ENCODE measurements at regions of chr3 and their contacts with region 1.

Region 1: GRCh38 chr3:14943042-14943441 is 4.3 kb upstream of the NR2C2 start:
- DNase-seq: no peak
- H3K4me3 ChIP-seq: no peak overlapping the region
- H3K27ac ChIP-seq: no peak overlapping the region
- H3K4me1 ChIP-seq: no peaks in the 10 kb centered on the region
- H3K27me3 ChIP-seq: no peaks in the 10 kb centered on the region
- CTCF ChIP-seq: no peak
- POLR2A ChIP-seq: no peak

Region 2: DNA sequence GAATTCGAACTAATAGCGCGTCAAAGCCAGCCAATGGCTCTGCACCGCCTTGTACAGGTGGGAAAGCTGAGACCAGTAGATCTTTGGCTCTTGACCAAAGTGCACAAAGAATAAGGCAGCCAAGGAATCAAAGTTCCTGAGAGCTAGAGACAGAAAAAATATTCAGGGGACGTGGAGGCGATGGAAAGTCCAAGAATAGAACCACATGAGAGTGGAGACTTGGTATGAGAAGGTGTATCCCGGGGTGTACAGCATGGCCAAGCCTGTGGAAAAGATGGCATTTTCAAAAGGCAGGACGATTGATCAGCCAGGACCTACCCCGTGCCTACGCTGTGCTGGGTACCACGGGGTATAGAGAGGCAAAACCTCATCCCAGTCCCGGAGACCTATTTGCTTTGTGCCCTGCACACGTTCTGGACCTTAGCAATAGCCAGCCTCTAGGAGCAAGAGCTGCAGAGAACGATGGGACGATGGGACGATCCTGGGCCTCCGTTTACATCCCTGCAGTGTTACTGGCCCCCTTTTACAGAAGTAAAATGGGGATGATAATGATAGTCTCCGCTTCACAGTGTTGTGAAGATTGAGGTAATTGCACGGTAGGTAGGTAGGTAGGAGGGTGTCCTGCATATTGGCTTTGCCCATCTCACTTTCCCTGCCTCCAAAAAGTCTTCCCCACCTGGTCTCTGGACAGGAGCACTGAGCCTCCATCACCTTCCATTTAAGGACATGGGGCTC is 156.5 kb after region 1 on chr3:
- intact Hi-C with region 1: loop called (anchors 5 kb)
- DNase-seq: no peak
- H3K4me3 ChIP-seq: peak overlapping the region; percentile 79 to 92
- H3K27ac ChIP-seq: peak overlapping the region; percentile 64 to 74
- H3K4me1 ChIP-seq: no peaks in the 10 kb centered on the region
- H3K27me3 ChIP-seq: no peaks in the 10 kb centered on the region
- CTCF ChIP-seq: no peak
- POLR2A ChIP-seq: no peak

Measured in prostate gland (tissue), 2 donors.